Stomach (tissue), 19 donors: ENCODE measurements at regions of chr1 and their contacts with region 1.

Region 1: GRCh38 chr1:153749408-153750005 is 21.7 kb downstream of the INTS3 start:
- DNase-seq: peak; percentile 89 to 93
- H3K4me3 ChIP-seq: no peak overlapping the region
- H3K27ac ChIP-seq: peak overlapping the region in 4 of 5 donors; percentile 53 to 77 (median 74)
- H3K4me1 ChIP-seq: peaks cover 24 to 54% (median 47%) of the 10 kb centered on the region in 4 donors
- H3K27me3 ChIP-seq: no peaks in the 10 kb centered on the region
- CTCF ChIP-seq: peak in 5 of 7 experiments; percentile 85 to 93 (median 92)
- EP300 ChIP-seq: no peak
- POLR2A ChIP-seq: no peak

Region 2: GRCh38 chr1:153485863-153486262 is 263.6 kb before region 1 on chr1:
- intact Hi-C with region 1: no loop called
- DNase-seq: no peak
- H3K4me3 ChIP-seq: no peak overlapping the region
- H3K27ac ChIP-seq: no peak overlapping the region
- H3K4me1 ChIP-seq: peaks cover 0 to 16% (median 4%) of the 10 kb centered on the region in 4 donors
- H3K27me3 ChIP-seq: peaks cover 0 to 39% (median 0%) of the 10 kb centered on the region in 3 donors
- CTCF ChIP-seq: no peak
- EP300 ChIP-seq: no peak
- POLR2A ChIP-seq: no peak

Region 3: DNA sequence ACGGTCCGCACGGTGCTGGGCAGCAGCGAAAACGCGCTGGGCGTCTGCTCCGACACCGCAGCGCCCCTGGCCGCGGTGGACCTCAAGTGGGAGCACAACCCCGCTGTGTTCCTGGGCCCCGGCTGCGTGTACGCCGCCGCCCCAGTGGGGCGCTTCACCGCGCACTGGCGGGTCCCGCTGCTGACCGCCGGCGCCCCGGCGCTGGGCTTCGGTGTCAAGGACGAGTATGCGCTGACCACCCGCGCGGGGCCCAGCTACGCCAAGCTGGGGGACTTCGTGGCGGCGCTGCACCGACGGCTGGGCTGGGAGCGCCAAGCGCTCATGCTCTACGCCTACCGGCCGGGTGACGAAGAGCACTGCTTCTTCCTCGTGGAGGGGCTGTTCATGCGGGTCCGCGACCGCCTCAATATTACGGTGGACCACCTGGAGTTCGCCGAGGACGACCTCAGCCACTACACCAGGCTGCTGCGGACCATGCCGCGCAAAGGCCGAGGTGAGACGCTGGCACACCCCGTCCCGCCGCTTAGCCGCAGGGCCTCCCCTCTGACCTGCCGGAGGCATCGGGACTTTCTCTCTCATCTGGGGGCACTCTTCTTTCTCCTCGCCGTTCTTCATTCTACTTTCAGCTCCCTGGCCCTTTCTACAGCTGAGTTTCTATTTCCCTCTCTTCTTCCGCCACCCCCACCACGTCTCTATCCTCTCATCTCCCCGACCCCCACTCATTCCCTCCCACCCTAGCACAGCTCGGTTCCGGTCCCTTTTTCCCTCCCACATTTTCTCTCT is 70.0 kb before region 1 on chr1:
- intact Hi-C with region 1: loop called (anchors 5 kb)
- DNase-seq: peak in 1 of 2 donors; percentile 69
- H3K4me3 ChIP-seq: peak overlapping the region; percentile 42 to 65 (median 56)
- H3K27ac ChIP-seq: peak overlapping the region in 3 of 5 donors; percentile 45 to 77 (median 61)
- H3K4me1 ChIP-seq: peaks cover 23 to 44% (median 27%) of the 10 kb centered on the region in 4 donors
- H3K27me3 ChIP-seq: peaks cover 0 to 44% (median 35%) of the 10 kb centered on the region in 3 donors
- CTCF ChIP-seq: peak in 3 of 7 experiments; percentile 4 to 16 (median 4)
- EP300 ChIP-seq: no peak
- POLR2A ChIP-seq: no peak

Region 4: GRCh38 chr1:153849487-153850185 is 100.1 kb after region 1 on chr1:
- intact Hi-C with region 1: no loop called
- DNase-seq: no peak
- H3K4me3 ChIP-seq: no peak overlapping the region
- H3K27ac ChIP-seq: no peak overlapping the region
- H3K4me1 ChIP-seq: peaks cover 0 to 30% (median 13%) of the 10 kb centered on the region in 4 donors
- H3K27me3 ChIP-seq: no peaks in the 10 kb centered on the region
- CTCF ChIP-seq: no peak
- EP300 ChIP-seq: no peak
- POLR2A ChIP-seq: no peak